Activated CD4-positive, alpha-beta T cell treated with anti-CD3 and anti-CD28 coated beads for 36 hours (primary cell): ENCODE measurements at regions of chr10 and their contacts with region 1.

Region 1: GRCh38 chr10:97869091-97870042 is 19.7 kb downstream of the GOLGA7B start:
- DNase-seq: peak; percentile 93
- ATAC-seq: peak; percentile 100
- H3K4me3 Mint-ChIP-seq: no peak overlapping the region
- H3K27ac Mint-ChIP-seq: peak overlapping the region; percentile 83
- H3K4me1 Mint-ChIP-seq: peaks cover 10% of the 10 kb centered on the region
- H3K27me3 Mint-ChIP-seq: no peaks in the 10 kb centered on the region

Region 2: DNA sequence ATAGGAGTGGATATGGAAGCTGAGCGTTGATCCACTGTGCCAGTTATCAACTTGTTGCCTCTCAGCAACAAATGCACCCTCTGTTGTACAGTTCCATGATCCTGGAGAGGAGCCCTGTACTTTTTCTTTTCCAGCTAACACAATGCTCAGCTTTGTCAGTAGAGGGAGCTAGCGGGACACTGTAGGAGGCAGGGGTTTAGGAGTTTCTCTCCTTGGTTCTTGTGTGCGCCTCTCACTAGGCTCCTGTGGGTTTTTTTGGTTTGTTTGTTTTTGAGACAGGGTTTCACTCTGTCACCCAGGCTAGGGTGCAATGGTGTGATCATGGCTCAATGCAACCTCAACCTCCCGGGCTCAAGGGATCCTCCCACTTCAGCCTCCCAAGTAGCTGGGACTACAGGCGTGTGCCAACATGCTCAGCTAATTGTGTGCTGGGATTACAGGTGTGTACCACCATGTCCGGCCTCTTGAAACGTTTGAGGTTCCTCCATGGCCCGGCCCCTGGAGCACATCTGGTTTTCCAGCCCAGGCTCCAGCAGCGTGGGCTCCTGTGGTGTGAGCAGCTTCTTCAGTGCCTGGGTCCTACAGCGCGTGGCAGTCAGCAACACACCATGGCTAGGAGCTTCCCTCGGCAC is 167.8 kb before region 1 on chr10:
- CTCF ChIA-PET with region 1: interaction called, 12 read pairs
- POLR2A ChIA-PET with region 1: no interaction called
- intact Hi-C with region 1: loop called in 1 of 2 experiments (anchors 5 kb)
- DNase-seq: peak; percentile 67
- ATAC-seq: peak; percentile 99
- H3K4me3 Mint-ChIP-seq: no peak overlapping the region
- H3K27ac Mint-ChIP-seq: no peak overlapping the region
- H3K4me1 Mint-ChIP-seq: no peaks in the 10 kb centered on the region
- H3K27me3 Mint-ChIP-seq: peaks cover 6% of the 10 kb centered on the region

Region 3: GRCh38 chr10:97714048-97714371 is 155.4 kb before region 1 on chr10:
- CTCF ChIA-PET with region 1: interaction called, 4 read pairs
- POLR2A ChIA-PET with region 1: no interaction called
- intact Hi-C with region 1: loop called in 1 of 2 experiments (anchors 5 kb)
- DNase-seq: peak; percentile 74
- ATAC-seq: peak; percentile 85
- H3K4me3 Mint-ChIP-seq: peak overlapping the region; percentile 79
- H3K27ac Mint-ChIP-seq: peak overlapping the region; percentile 88
- H3K4me1 Mint-ChIP-seq: peaks cover 11% of the 10 kb centered on the region
- H3K27me3 Mint-ChIP-seq: peaks cover 19% of the 10 kb centered on the region

Region 4: DNA sequence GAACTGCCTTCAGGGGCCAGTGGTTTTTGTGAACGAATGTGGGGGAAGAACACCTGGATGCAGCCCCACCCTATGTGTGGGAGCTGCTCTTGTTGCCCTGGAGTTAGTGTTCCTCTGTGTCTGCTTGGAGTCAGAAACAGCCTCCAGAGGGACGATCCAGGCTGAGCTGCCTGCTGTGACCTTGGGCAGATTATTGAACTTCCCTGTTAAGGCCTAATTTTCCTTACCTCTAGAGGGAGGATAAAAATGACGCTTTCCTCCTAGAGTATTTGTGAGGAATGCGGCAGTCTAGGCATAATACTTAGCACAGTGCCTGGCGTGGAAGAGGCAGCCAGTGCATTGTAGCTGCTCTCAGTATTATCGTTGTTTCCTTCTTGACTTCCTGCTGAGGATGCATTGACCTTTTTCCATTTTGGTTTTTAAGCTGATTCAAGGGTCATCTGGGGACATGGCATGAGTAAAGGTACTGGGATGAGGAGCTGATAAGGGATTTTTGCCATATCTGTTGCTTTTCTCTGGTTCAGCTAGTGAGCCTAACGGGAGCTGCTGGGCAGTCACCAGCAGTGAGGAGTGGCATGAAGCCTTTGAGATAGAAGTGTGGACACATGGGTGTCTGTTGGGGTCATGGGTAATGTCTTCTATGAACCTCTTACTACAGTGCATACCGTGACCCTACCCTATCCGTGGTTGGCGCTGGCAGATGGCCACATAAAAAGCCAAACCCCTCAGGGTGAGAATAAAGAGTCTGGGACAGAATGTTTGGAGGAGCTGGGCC is 126.0 kb before region 1 on chr10:
- CTCF ChIA-PET with region 1: interaction called, 10 read pairs
- POLR2A ChIA-PET with region 1: no interaction called
- intact Hi-C with region 1: no loop called
- DNase-seq: no peak
- ATAC-seq: no peak
- H3K4me3 Mint-ChIP-seq: no peak overlapping the region
- H3K27ac Mint-ChIP-seq: no peak overlapping the region
- H3K4me1 Mint-ChIP-seq: peaks cover 32% of the 10 kb centered on the region
- H3K27me3 Mint-ChIP-seq: no peaks in the 10 kb centered on the region

Region 5: DNA sequence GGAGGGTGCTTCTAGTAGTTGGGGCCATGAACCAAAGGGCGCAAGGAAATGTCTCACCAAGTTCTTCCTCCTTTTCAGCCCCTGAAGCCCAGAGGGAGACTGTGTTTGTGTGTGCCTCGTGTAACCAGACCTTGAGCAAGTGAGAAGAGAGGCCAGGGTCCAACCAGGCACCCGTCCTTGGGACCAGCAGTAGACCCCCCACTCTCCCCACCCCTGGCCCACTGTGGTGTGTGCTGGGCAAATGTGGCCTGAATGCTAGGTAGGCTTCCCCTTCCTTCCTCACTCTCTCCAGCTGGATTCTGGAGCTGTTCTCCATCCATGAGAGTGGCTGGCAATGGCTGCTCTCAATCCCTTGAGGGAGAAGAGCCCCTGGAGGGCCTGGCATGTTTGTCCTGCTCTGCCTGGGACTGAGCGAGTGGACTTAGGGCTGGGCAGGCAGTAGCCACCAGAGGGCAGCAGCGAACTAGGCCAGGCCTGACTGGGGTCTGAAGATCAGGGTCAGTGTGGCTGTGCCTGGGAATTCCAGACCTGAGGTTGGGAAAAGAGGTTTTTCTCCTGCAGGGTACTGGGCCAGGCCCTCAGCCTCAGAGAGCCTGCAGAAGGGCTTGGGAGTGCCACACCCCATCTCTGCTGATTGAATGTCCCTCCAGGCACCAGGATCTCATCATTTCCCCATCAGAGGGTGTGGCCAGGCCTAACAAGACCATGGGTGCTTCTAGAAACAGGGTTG is 110.0 kb before region 1 on chr10:
- CTCF ChIA-PET with region 1: interaction called, 4 read pairs
- POLR2A ChIA-PET with region 1: no interaction called
- intact Hi-C with region 1: loop called in 1 of 2 experiments (anchors 1 kb)
- DNase-seq: peak; percentile 73
- ATAC-seq: peak; percentile 72
- H3K4me3 Mint-ChIP-seq: no peak overlapping the region
- H3K27ac Mint-ChIP-seq: no peak overlapping the region
- H3K4me1 Mint-ChIP-seq: no peaks in the 10 kb centered on the region
- H3K27me3 Mint-ChIP-seq: no peaks in the 10 kb centered on the region

Region 6: GRCh38 chr10:97792141-97792721 is 77.1 kb before region 1 on chr10:
- CTCF ChIA-PET with region 1: interaction called, 93 read pairs
- POLR2A ChIA-PET with region 1: no interaction called
- intact Hi-C with region 1: loop called (anchors 1 kb)
- DNase-seq: peak; percentile 85
- ATAC-seq: peak; percentile 81
- H3K4me3 Mint-ChIP-seq: no peak overlapping the region
- H3K27ac Mint-ChIP-seq: no peak overlapping the region
- H3K4me1 Mint-ChIP-seq: peaks cover 19% of the 10 kb centered on the region
- H3K27me3 Mint-ChIP-seq: no peaks in the 10 kb centered on the region

Region 7: DNA sequence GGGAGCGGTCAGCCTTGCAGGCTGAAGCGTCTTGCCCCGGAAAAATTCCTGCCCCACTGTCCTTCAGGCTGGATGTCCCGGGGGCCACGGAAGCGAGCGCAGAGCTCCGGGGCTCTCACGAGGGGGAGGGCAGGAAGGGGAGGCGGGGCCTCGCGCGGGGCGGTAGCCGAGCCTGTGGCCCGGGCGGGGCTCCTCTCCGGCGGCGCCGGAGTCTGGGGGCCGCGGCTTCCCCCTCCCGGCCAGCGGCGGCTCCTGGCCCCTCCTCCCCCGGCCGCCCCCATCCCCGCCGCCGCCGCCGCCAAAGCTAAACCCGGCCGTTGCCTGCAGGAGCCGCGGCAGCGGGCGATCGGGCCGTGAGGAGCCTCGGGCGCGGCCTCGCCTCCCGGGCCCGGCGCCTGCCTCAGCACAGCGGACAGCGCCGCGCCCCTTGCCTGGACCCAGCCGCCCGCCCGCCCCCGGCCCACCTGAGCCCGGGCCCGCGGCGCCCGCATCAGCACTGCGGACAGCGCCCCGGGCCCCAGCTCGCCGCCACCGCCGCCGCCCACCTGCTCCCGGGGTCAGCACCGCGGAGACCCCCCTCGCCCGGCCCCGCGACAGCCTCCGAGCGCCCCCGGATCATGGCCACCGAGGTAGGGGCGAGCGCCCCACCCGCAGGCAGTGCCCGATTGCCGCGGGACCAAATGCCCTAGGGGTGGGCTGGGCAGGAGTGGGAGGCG is 19.5 kb before region 1 on chr10 and contains the start of gene GOLGA7B:
- CTCF ChIA-PET with region 1: interaction called, 19 read pairs
- POLR2A ChIA-PET with region 1: no interaction called
- intact Hi-C with region 1: loop called in 1 of 2 experiments (anchors 1 kb)
- DNase-seq: peak; percentile 76
- ATAC-seq: peak; percentile 73
- H3K4me3 Mint-ChIP-seq: peak within 1 kb of the TSS; percentile 77
- H3K27ac Mint-ChIP-seq: peak within 1 kb of the TSS; percentile 24
- H3K4me1 Mint-ChIP-seq: peaks cover 35% of the 10 kb centered on the region
- H3K27me3 Mint-ChIP-seq: no peaks in the 10 kb centered on the region
- total RNA-seq, gene GOLGA7B: 0.47 to 0.57 TPM

Region 8: GRCh38 chr10:98357194-98357822 is 487.9 kb after region 1 on chr10:
- CTCF ChIA-PET with region 1: no interaction called
- POLR2A ChIA-PET with region 1: no interaction called
- intact Hi-C with region 1: no loop called
- DNase-seq: no peak
- ATAC-seq: no peak
- H3K4me3 Mint-ChIP-seq: no peak overlapping the region
- H3K27ac Mint-ChIP-seq: no peak overlapping the region
- H3K4me1 Mint-ChIP-seq: peaks cover 6% of the 10 kb centered on the region
- H3K27me3 Mint-ChIP-seq: peaks cover 19% of the 10 kb centered on the region